GM12878 (cell line): ENCODE measurements at regions of chr1 and their contacts with region 1.

Region 1: GRCh38 chr1:206725109-206725963 is 40.6 kb downstream of the MAPKAPK2 start:
- DNase-seq: no peak
- ATAC-seq: peak; percentile 84
- H3K4me3 ChIP-seq: no peak overlapping the region
- H3K27ac ChIP-seq: 0 out of 2 replicates have a peak overlapping the region, but pooled peaks have one; percentile 34
- H3K4me1 ChIP-seq: peaks cover 29% of the 10 kb centered on the region
- H3K27me3 ChIP-seq: no peaks in the 10 kb centered on the region
- CTCF ChIP-seq: peak; percentile 59 to 78 (median 73)
- EP300 ChIP-seq: no peak
- POLR2A ChIP-seq: no peak
- RAD21 ChIP-seq: peak; percentile 53

Region 2: DNA sequence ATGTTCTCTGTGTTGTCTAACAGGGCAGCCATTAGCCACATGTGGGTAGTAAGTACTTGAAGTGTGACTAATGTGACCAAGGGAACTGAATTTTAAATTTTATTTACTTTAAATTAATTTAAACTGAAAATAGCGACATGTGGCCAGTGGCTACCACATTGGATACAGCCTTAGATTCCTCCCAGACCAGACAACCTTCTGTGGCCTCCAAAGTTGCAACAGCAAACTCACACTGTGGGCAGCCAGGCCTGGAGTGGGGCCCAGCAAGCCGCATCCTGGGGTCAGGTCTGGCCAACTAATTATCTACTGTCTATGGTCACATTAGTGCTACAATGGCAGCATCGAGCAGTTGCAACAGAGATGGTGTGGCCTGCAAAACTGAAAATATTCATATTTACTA is 124.8 kb before region 1 on chr1:
- CTCF ChIA-PET with region 1: no interaction called
- POLR2A ChIA-PET with region 1: no interaction called
- RAD21 ChIA-PET with region 1: no interaction called
- SMC1A ChIA-PET with region 1: no interaction called
- in situ Hi-C with region 1: no loop called
- intact Hi-C with region 1: no loop called
- DNase-seq: no peak
- ATAC-seq: no peak
- H3K4me3 ChIP-seq: no peak overlapping the region
- H3K27ac ChIP-seq: no peak overlapping the region
- H3K4me1 ChIP-seq: no peaks in the 10 kb centered on the region
- H3K27me3 ChIP-seq: no peaks in the 10 kb centered on the region
- CTCF ChIP-seq: no peak
- EP300 ChIP-seq: no peak
- POLR2A ChIP-seq: no peak
- RAD21 ChIP-seq: no peak

Region 3: DNA sequence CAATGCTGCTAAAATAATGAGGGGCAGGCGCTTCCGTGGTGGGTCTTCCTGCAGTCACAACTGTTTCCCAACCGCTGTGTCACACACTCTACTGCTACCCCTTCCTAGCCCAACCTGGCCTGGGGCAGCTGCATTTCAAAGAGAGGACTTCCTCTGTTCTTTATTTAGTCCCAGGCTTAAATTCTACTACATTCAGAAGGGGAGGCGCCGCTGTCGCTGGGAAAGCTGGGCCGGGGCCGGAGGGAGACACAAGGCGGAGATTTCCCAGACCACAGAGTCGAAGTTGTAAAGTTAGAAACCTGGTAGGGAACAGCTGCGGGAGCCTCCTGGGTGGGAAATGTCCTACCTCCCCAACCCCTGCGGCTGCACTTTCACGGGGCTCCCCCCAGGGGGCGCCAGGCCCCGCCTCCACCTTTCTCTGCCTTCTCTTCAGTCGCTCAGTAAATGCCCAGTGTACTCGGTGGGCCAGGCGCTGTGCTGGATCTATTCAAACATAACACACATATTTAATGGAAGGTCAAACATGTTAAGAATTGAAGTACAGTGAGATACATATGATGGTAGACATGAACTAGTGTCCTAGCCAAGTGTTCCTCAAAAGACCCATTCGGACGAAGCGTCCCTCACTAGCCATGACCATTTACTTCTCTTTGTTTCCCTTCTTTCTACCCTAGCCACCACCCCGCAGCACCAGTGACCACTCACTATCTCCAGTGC is 66.9 kb before region 1 on chr1:
- CTCF ChIA-PET with region 1: interaction called, 46 read pairs
- POLR2A ChIA-PET with region 1: no interaction called
- RAD21 ChIA-PET with region 1: interaction called, 15 read pairs
- SMC1A ChIA-PET with region 1: interaction called, 67 read pairs
- in situ Hi-C with region 1: no loop called
- intact Hi-C with region 1: no loop called
- DNase-seq: no peak
- ATAC-seq: peak; percentile 93
- H3K4me3 ChIP-seq: no peak overlapping the region
- H3K27ac ChIP-seq: no peak overlapping the region
- H3K4me1 ChIP-seq: peaks cover 9% of the 10 kb centered on the region
- H3K27me3 ChIP-seq: no peaks in the 10 kb centered on the region
- CTCF ChIP-seq: peak; percentile 74 to 99 (median 98)
- EP300 ChIP-seq: no peak
- POLR2A ChIP-seq: no peak
- RAD21 ChIP-seq: peak; percentile 62

Region 4: DNA sequence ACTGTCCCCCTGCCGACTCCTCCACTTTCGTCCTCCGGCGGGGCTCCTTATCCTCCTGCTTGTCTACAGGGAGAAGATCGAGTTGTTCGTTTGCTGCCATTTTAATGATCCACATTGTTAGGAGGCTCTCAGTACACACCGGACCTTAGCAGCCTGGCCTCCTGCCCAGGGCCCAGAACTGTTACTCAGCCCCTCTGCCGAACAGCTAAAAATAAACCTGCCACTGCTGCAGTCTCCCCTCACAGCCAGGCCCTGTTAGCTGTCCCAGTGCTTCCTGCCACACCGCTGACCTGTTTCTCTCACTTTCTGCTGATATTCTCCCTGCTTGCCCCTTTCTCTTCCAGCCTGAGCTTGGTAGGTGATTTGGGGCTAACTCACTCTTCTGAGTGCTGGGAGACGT is 32.3 kb before region 1 on chr1:
- CTCF ChIA-PET with region 1: interaction called, 45 read pairs
- POLR2A ChIA-PET with region 1: interaction called, 334 read pairs
- RAD21 ChIA-PET with region 1: interaction called, 9 read pairs
- SMC1A ChIA-PET with region 1: interaction called, 14 read pairs
- in situ Hi-C with region 1: no loop called
- intact Hi-C with region 1: no loop called
- DNase-seq: no peak
- ATAC-seq: no peak; the same call in 2 of the 3 replicates
- H3K4me3 ChIP-seq: no peak overlapping the region
- H3K27ac ChIP-seq: no peak overlapping the region
- H3K4me1 ChIP-seq: peaks cover 22% of the 10 kb centered on the region
- H3K27me3 ChIP-seq: no peaks in the 10 kb centered on the region
- CTCF ChIP-seq: no peak
- EP300 ChIP-seq: no peak
- POLR2A ChIP-seq: no peak
- RAD21 ChIP-seq: no peak

Region 5: DNA sequence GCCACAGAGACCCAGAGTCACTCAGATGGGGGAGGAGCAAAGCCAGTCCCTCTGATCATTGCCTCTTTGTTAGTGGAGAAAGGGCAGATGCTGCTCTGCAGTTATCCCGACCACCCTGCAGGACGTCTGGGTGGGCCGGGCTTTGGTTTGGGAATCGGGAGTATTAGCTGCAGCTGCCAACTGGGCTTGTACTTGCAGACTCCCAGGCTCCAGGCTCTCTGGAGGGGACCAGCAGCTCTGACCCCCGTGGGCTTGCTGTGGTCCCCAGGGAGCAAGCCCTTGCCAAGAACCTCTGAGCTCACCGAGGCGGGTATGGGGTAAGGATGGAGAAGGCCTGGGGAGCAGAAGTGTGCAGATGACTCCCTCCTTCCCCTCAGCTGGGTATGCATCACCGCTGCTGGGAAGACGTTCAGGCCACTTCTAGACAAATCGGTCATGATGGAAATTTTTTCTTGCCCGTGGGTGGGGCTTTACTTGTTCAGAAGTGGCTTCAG is 19.0 kb before region 1 on chr1:
- CTCF ChIA-PET with region 1: interaction called, 21 read pairs
- POLR2A ChIA-PET with region 1: interaction called, 54 read pairs
- RAD21 ChIA-PET with region 1: interaction called, 20 read pairs
- SMC1A ChIA-PET with region 1: interaction called, 36 read pairs
- in situ Hi-C with region 1: no loop called
- intact Hi-C with region 1: no loop called
- DNase-seq: no peak
- ATAC-seq: no peak
- H3K4me3 ChIP-seq: no peak overlapping the region
- H3K27ac ChIP-seq: no peak overlapping the region
- H3K4me1 ChIP-seq: peaks cover 60% of the 10 kb centered on the region
- H3K27me3 ChIP-seq: no peaks in the 10 kb centered on the region
- CTCF ChIP-seq: no peak
- EP300 ChIP-seq: no peak
- POLR2A ChIP-seq: no peak
- RAD21 ChIP-seq: no peak

Region 6: DNA sequence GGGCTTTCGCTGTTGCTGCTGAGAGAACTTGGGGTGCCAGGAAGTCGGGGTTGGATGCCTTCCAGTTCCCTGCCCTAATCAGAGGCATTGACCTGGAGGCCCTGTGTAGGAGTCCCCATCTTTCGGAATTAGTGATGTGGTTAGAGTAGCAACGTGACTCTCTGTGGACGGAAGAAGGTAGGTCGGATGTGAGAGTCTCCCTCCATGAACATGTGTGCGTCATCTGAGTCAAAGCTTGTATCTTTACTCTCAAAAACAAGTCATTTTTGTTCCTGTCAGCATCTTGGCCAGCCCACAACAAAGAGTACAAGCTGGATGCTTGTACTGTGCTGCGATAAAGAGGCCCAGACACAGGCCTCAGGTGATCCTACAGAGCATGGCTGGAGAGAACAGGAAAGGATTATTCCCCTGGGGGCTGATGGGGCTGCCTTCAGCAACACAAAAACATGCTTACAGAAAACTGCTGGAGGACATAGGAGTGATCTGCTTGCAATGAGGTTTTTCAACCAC is 77.9 kb after region 1 on chr1:
- CTCF ChIA-PET with region 1: interaction called, 805 read pairs
- POLR2A ChIA-PET with region 1: interaction called, 3 read pairs
- RAD21 ChIA-PET with region 1: interaction called, 297 read pairs
- SMC1A ChIA-PET with region 1: interaction called, 66 read pairs
- in situ Hi-C with region 1: no loop called
- intact Hi-C with region 1: loop called (anchors 1 kb)
- DNase-seq: peak; percentile 98
- ATAC-seq: peak; percentile 97
- H3K4me3 ChIP-seq: no peak overlapping the region
- H3K27ac ChIP-seq: peak overlapping the region; percentile 55
- H3K4me1 ChIP-seq: peaks cover 20% of the 10 kb centered on the region
- H3K27me3 ChIP-seq: no peaks in the 10 kb centered on the region
- CTCF ChIP-seq: no peak
- EP300 ChIP-seq: peak; percentile 98 to 99
- POLR2A ChIP-seq: peak; percentile 26; the same call in 1 of the 2 replicates
- RAD21 ChIP-seq: peak; percentile 9; the same call in 1 of the 2 replicates

Region 7: DNA sequence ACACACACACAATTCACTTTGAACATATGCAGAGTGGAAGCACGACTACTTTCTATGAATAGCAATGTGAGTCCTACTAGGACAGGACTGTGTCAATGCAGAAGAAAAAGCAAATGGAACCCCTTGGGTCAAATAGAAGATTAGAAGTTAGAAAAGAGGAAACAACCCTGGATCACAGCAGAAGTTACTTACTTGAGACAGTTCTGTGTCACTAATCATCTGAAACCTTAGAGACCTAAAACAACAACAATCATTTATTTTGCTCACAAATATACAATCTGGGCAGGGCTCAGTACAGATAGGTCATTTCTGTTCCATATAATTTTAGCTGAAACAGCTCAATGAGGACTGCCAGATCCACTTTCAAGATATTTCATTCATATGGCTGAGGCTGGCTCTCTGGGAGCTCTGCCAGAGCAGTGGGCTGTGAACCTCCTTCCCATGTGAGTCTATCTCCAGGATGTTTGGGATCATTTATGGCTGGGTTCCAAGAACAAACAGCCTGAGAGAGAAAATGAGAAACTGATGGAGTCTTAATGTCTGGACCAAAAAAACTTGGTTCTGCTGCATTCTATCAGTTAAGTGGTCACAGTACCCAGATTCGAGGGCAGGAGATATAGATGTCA is 89.5 kb after region 1 on chr1:
- CTCF ChIA-PET with region 1: interaction called, 805 read pairs
- POLR2A ChIA-PET with region 1: interaction called, 3 read pairs
- RAD21 ChIA-PET with region 1: interaction called, 297 read pairs
- SMC1A ChIA-PET with region 1: interaction called, 66 read pairs
- in situ Hi-C with region 1: no loop called
- intact Hi-C with region 1: no loop called
- DNase-seq: no peak
- ATAC-seq: peak; percentile 42
- H3K4me3 ChIP-seq: no peak overlapping the region
- H3K27ac ChIP-seq: no peak overlapping the region; the same call in 1 of the 2 replicates
- H3K4me1 ChIP-seq: peaks cover 27% of the 10 kb centered on the region
- H3K27me3 ChIP-seq: no peaks in the 10 kb centered on the region
- CTCF ChIP-seq: no peak
- EP300 ChIP-seq: no peak
- POLR2A ChIP-seq: no peak
- RAD21 ChIP-seq: no peak

Region 8: DNA sequence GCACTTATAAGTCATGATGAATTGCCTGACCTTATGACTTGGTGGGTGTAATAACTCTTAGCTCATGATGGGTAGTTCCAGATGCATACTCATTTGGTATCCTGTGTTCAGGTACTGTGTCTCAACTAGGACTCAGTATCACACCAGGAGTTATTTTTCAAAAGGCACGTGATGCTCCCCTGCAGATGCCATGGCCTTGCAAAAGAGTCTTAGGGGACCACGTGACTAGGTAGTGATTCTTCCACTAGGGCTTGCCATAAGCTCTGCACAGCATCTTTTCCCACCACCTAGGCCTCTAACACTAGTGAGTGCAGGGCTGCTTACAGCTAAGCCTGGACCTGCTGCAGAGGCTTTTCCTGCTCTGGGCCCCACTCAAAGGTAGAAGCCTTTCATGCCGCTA is 248.8 kb after region 1 on chr1:
- CTCF ChIA-PET with region 1: interaction called, 18 read pairs
- POLR2A ChIA-PET with region 1: no interaction called
- RAD21 ChIA-PET with region 1: no interaction called
- SMC1A ChIA-PET with region 1: interaction called, 4 read pairs
- in situ Hi-C with region 1: loop called (anchors 5 kb)
- intact Hi-C with region 1: no loop called
- DNase-seq: no peak
- ATAC-seq: no peak
- H3K4me3 ChIP-seq: no peak overlapping the region
- H3K27ac ChIP-seq: no peak overlapping the region
- H3K4me1 ChIP-seq: peaks cover 15% of the 10 kb centered on the region
- H3K27me3 ChIP-seq: no peaks in the 10 kb centered on the region
- CTCF ChIP-seq: no peak
- EP300 ChIP-seq: no peak
- POLR2A ChIP-seq: no peak
- RAD21 ChIP-seq: no peak